Heart right ventricle (tissue), 16 donors: ENCODE measurements at regions of chr19 and their contacts with region 1.

Region 1: GRCh38 chr19:57362997-57363705 is at the starts of genes TRAPPC2B and ZNF547:
- DNase-seq: peak; percentile 99 to 100
- ATAC-seq: peak; percentile 95 to 98 (median 97)
- H3K4me3 ChIP-seq: peak within 1 kb of the TSS; percentile 67 to 94 (median 82)
- H3K27ac ChIP-seq: peak within 1 kb of the TSS; percentile 72 to 99 (median 96)
- H3K4me1 ChIP-seq: peaks cover 4 to 57% (median 28%) of the 10 kb centered on the region in 9 donors
- H3K27me3 ChIP-seq: no peaks in the 10 kb centered on the region
- CTCF ChIP-seq: no peak
- total RNA-seq, gene TRAPPC2B: 8.1 to 18.8 (median 11.4) TPM
- total RNA-seq, gene ZNF547: 2.0 to 4.2 (median 2.8) TPM

Region 2: DNA sequence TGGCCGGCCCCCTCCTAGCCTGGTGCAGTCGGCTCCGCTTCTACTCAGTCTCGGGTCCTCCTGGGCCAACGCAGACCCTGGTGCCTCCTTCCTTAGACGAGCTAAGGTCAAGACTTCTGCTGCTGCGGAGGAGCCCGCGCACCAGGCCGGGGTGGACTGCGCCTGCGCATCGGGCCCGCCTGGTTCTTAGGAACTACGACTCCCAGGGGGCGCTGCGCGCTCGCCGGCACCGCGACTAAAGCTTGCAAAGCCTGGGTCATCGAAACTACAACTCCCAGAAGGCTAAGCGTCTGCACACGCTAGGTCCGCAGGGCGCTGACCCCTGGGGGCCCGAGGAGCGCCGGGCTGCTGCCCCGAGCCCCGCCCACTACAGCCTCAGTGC is 691.5 kb before region 1 on chr19 and contains the start of gene ZNF835:
- intact Hi-C with region 1: loop called in 1 of 10 experiments (anchors 10 kb)
- DNase-seq: peak; percentile 95 to 99
- ATAC-seq: peak; percentile 95 to 99 (median 98)
- H3K4me3 ChIP-seq: peak within 1 kb of the TSS; percentile 29 to 95 (median 81)
- H3K27ac ChIP-seq: peak within 1 kb of the TSS in 9 of 10 donors; percentile 46 to 82 (median 57)
- H3K4me1 ChIP-seq: peaks cover 5 to 19% (median 11%) of the 10 kb centered on the region in 9 donors
- H3K27me3 ChIP-seq: no peaks in the 10 kb centered on the region
- CTCF ChIP-seq: peak in 6 of 9 donors; percentile 40 to 59 (median 53)
- total RNA-seq, gene ZNF835: 2.0 to 8.8 (median 3.8) TPM

Region 3: GRCh38 chr19:57279418-57280066 is 83.6 kb before region 1 on chr19:
- intact Hi-C with region 1: loop called in 3 of 10 experiments (anchors 2 to 5 kb)
- DNase-seq: peak; percentile 86 to 92
- ATAC-seq: peak; percentile 94 to 99 (median 97)
- H3K4me3 ChIP-seq: peak overlapping the region; percentile 70 to 99 (median 92)
- H3K27ac ChIP-seq: peak overlapping the region; percentile 85 to 100 (median 97)
- H3K4me1 ChIP-seq: peaks cover 0 to 50% (median 42%) of the 10 kb centered on the region in 9 donors
- H3K27me3 ChIP-seq: no peaks in the 10 kb centered on the region
- CTCF ChIP-seq: peak in 5 of 9 donors; percentile 38 to 67 (median 64)

Region 4: DNA sequence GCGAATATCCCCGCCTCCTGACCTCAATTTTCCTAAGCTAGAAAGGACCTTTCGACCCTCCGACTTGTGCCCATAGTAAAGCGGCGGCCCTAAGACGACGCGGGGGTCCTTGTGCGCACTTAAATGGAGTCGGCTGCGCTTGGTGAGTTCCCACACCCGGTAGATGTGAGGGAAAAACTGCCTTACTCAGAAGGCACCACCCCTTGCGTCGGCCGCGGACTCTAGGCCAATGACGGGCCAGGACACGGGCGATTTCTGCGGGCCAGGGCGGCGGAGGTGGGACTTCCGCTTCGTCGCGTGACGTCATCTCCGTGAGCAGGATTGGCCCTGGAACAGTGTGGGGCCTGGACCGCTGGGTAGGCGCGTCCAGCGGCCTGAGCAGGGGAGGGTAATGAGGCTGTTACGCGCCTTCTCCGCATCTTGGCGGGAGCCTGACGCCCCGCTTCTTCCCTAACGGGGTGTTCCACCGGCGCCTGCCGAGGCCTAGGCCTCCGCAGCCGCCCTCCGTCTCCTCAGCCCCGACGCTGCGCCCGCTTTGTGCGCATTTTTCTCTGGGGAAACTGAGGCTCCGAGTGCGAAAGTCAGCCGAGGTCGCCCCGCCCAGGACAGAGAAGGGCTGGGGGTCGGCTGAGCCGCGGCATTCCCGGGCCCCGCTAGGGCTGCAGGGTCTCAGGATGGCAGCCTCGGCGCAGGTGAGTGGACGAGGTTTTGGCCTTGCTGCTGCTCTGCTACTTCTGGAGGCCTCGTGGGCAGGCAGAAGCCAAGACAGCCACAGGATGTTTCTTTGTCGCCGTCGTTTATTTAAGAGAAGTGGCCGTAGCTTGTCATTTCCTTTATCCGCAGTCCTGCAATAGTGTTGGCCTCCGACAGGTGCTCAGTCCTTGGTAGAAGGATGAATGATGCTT is 42.7 kb before region 1 on chr19 and contains the start of gene ZNF543:
- intact Hi-C with region 1: loop called in 2 of 10 experiments (anchors 1 kb)
- DNase-seq: peak; percentile 96 to 97
- ATAC-seq: peak; percentile 99 to 100 (median 100)
- H3K4me3 ChIP-seq: peak within 1 kb of the TSS; percentile 76 to 98 (median 86)
- H3K27ac ChIP-seq: peak within 1 kb of the TSS; percentile 44 to 96 (median 92)
- H3K4me1 ChIP-seq: peaks cover 5 to 34% (median 23%) of the 10 kb centered on the region in 9 donors
- H3K27me3 ChIP-seq: peaks cover 0 to 27% (median 0%) of the 10 kb centered on the region in 7 donors
- CTCF ChIP-seq: peak in 1 of 9 donors; percentile 10
- total RNA-seq, gene ZNF543: 5.5 to 9.2 (median 7.0) TPM

Region 5: DNA sequence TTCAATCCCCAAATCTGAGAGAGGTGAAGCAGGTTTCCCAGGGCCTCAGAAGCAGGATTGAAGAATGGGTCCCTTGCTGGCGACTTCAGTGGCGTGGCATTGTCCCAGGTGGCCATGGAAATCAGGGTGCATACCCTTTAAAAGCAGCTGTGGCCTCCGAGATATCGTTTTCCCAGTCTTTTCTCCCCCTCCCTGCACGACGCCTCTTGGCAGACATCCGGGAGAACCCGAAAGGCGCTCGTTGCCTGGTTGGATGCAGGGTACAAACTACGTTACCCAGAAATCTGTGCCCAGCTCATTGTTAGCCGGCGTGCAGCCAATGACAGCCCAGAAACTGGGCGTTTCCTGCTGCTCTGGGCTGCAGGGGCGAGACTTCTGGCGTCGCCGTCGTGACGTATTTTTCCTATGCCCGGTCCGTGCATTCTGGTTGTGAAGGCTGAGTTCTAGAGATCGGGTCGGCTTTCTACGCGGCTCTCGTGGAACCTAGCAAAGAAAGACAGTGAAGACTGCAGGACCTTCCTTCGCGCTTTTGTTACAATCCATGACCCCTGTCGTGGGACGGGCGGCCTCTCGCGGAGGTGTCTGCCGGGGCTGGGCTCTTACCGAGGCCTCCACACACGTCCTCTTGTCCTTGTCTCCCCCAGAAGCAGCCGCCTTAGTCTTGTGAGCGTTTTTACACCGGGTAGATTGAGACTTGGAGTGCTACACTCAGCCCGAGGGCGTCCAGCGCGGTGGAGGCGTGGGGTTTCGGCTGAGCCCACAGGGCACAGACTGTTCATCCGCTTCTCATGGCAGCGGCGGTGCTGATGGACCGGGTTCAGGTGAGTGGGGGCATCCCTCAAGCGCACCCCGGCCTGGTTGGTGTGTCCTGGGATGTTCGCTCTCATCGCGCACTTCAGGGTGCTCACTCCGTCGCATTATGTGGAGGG is 12.0 kb before region 1 on chr19 and contains the start of gene ZNF304:
- intact Hi-C with region 1: loop called in 1 of 10 experiments (anchors 1 kb)
- DNase-seq: peak; percentile 93 to 96
- ATAC-seq: peak; percentile 96 to 100 (median 99)
- H3K4me3 ChIP-seq: peak within 1 kb of the TSS; percentile 77 to 100 (median 92)
- H3K27ac ChIP-seq: peak within 1 kb of the TSS; percentile 45 to 94 (median 90)
- H3K4me1 ChIP-seq: peaks cover 0 to 45% (median 25%) of the 10 kb centered on the region in 9 donors
- H3K27me3 ChIP-seq: no peaks in the 10 kb centered on the region
- CTCF ChIP-seq: no peak
- total RNA-seq, gene ZNF304: 8.0 to 15.7 (median 11.4) TPM

Region 6: DNA sequence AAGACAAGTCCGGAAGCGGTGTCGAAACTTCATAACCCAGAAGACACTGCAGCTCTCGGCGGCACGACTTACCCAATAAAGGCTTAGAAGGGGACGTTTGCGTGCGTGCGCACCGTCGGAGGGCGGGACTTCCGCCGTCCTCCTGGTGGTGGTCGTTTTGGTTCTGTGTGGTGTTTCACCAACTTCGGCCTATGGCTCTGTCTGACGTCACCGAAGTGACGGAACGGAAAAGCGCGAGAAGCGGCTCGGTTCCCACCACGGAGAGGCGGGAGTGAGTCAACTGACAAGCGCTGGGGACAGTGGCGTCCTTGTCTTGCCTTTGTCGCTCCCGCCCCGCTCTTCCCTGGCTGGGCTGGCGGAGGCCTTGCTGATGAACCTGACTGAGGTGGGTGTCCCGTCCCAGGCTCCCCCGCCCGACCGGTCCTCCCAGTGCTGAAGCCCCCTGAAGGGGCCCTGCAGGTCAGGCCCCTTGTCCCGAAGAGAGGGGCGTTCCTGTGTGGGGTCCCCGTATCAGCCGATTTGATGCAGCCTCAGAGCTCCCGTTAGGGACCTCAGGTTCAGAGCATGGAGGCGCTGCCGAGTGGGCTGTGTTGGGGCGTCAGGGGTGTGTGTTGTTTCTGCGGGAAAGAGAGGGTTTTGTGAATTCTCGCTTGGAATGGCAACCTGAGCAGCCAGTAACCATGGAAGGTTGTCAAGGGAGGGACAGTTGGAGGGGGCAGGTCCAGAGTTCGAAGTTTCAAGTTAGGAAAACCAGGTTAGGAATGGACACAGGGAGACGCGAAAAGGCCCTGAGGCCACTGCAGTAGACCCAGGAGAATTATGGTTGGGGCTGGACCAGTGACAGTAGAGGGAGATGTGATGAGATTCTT is 26.8 kb after region 1 on chr19 and contains the start of gene ZNF548:
- intact Hi-C with region 1: loop called in 4 of 10 experiments (anchors 1 to 2 kb)
- DNase-seq: peak; percentile 95 to 97
- ATAC-seq: peak; percentile 99 to 100 (median 100)
- H3K4me3 ChIP-seq: peak within 1 kb of the TSS; percentile 72 to 99 (median 92)
- H3K27ac ChIP-seq: peak within 1 kb of the TSS; percentile 71 to 99 (median 94)
- H3K4me1 ChIP-seq: peaks cover 0 to 34% (median 22%) of the 10 kb centered on the region in 9 donors
- H3K27me3 ChIP-seq: no peaks in the 10 kb centered on the region
- CTCF ChIP-seq: peak in 7 of 9 donors; percentile 9 to 52 (median 34)
- total RNA-seq, gene ZNF548: 12.7 to 18.8 (median 14.2) TPM

Region 7: GRCh38 chr19:57419439-57419838 is 56.3 kb after region 1 on chr19:
- intact Hi-C with region 1: no loop called
- DNase-seq: no peak
- ATAC-seq: peak in 1 of 8 donors; percentile 35
- H3K4me3 ChIP-seq: no peak overlapping the region
- H3K27ac ChIP-seq: no peak overlapping the region
- H3K4me1 ChIP-seq: peaks cover 0 to 7% (median 0%) of the 10 kb centered on the region in 9 donors
- H3K27me3 ChIP-seq: no peaks in the 10 kb centered on the region
- CTCF ChIP-seq: no peak